Testis (tissue), 5 donors: ENCODE measurements at regions of chr17 and their contacts with region 1.

Region 1: GRCh38 chr17:2244545-2245525 is 58.8 kb downstream of the SMG6 start:
- DNase-seq: peak; percentile 87
- H3K4me3 ChIP-seq: no peak overlapping the region
- H3K27ac ChIP-seq: peak overlapping the region in 1 of 2 donors; percentile 52
- H3K4me1 ChIP-seq: peaks cover 17% of the 10 kb centered on the region
- H3K27me3 ChIP-seq: no peaks in the 10 kb centered on the region
- CTCF ChIP-seq: peak; percentile 88 to 98 (median 98)
- POLR2A ChIP-seq: no peak

Region 2: DNA sequence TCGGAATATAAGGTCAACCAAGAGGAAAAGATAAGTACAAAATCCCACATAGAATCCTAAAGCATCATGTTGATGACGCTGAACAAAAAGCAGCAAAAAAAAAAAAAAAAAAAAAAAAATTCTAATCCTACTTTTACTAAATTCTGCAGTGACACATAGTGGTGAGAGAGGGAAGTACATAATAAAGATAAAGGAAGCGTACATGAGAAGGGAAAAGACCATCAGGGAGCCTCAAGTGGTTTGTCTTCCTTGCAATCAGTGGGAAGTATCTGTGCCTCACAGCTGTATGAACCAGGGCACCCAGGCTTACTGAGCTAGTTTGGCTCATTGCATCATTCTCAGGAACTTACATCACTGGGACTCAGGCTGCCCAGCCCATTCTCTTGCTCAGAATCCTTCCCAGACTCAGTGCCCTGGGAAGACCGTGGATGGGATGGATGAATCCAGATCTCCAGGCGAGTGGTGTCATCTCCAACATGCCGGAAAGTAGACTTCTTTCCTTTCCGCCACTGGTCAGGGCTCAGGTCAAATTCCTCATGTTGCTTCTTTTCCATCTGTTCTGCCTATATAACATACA is 37.5 kb after region 1 on chr17:
- intact Hi-C with region 1: loop called (anchors 2 kb)
- DNase-seq: no peak
- H3K4me3 ChIP-seq: no peak overlapping the region
- H3K27ac ChIP-seq: no peak overlapping the region
- H3K4me1 ChIP-seq: no peaks in the 10 kb centered on the region
- H3K27me3 ChIP-seq: no peaks in the 10 kb centered on the region
- CTCF ChIP-seq: peak; percentile 24 to 75 (median 46)
- POLR2A ChIP-seq: no peak